Ovary (tissue), 10 donors: ENCODE measurements at regions of chr13 and their contacts with region 1.

Region 1: DNA sequence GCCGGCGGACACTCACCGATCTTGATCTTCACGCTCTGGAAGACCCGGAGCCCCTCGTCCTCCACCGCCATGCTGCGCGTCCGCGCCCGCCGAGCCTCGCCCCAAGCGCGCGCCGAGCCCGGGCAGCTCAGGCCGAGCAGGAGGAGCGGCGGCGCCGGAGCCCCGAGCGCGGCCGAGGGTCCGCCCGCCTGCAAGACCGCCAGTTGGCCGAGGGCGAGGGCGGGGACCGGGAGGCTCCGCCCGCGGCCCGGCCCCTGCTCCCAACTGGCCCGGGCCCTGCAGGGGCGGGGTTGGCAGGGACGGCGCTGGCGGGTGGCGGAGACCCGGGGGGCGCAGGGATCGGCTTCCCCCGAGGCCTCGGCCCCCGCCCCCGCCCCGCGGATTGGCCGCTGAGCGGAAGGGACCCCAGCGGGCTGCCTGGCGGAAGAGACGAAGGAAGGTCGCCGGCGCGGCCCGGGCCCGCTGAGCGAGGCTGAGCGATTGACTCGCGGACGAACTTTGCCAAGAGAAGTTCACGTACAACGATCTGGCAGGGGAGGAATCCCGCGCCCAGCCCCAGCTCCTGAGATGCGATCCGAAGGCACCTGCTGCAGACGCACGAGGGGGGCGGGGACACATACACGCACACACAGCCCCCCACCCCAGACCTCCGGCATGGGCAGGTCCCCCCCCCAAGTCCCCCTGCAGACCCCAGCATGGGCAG is at the start of gene RASA3:
- DNase-seq: peak; percentile 64 to 85 (median 75)
- H3K4me3 ChIP-seq: peak within 1 kb of the TSS; percentile 77
- H3K27ac ChIP-seq: peak within 1 kb of the TSS; percentile 22 to 63
- H3K4me1 ChIP-seq: peaks cover 7% of the 10 kb centered on the region
- H3K27me3 ChIP-seq: no peaks in the 10 kb centered on the region
- CTCF ChIP-seq: no peak
- EP300 ChIP-seq: no peak
- POLR2A ChIP-seq: no peak
- total RNA-seq, gene RASA3: 5.4 to 16.9 (median 9.4) TPM

Region 2: GRCh38 chr13:114053026-114053425 is 79.5 kb before region 1 on chr13:
- intact Hi-C with region 1: loop called in 1 of 4 experiments (anchors 10 kb)
- DNase-seq: no peak
- H3K4me3 ChIP-seq: no peak overlapping the region
- H3K27ac ChIP-seq: no peak overlapping the region
- H3K4me1 ChIP-seq: no peaks in the 10 kb centered on the region
- H3K27me3 ChIP-seq: no peaks in the 10 kb centered on the region
- CTCF ChIP-seq: no peak
- EP300 ChIP-seq: no peak
- POLR2A ChIP-seq: no peak

Region 3: DNA sequence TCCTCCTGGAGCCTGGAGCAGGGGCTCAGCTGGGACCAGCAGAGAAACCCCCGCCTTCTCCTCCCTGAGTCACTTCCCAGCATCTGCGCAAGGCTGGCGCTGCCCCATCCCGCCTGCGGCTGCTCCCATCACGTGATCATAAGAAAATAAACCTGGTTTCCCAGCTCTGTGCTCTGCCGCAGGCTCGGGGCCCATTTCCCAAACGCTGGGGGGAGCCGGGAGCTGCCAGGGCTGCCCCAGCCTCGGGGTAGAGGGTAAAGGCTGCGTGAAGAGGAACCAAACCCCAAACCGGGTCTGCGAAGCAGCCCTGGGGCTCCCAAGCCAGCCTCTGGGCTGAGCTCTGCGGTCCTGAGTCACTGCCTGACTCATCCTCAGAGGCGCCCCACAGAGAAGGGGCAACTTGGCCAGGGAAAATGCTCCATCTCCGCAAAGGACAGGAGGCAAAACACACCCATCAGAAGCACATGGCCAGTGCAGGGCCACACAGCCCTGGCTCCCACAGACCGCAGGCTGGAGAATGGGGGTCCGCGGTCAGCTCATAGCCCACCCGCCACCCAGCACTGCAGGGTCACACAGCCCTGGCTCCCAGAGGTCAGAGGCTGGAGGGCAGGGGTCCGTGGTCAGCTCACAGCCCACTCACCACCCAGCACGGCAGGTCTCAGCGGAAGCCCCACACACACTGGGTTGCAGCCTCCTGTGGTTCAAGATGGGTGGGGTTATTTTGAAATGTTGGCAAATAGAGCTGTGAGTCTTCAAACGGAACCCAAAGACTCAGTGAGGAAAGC is 67.2 kb before region 1 on chr13:
- intact Hi-C with region 1: loop called in 3 of 4 experiments (anchors 5 to 10 kb)
- DNase-seq: peak; percentile 86 to 91 (median 90)
- H3K4me3 ChIP-seq: peak overlapping the region; percentile 38
- H3K27ac ChIP-seq: peak overlapping the region; percentile 89 to 99
- H3K4me1 ChIP-seq: peaks cover 22% of the 10 kb centered on the region
- H3K27me3 ChIP-seq: no peaks in the 10 kb centered on the region
- CTCF ChIP-seq: no peak
- EP300 ChIP-seq: peak; percentile 94
- POLR2A ChIP-seq: peak; percentile 32

Region 4: DNA sequence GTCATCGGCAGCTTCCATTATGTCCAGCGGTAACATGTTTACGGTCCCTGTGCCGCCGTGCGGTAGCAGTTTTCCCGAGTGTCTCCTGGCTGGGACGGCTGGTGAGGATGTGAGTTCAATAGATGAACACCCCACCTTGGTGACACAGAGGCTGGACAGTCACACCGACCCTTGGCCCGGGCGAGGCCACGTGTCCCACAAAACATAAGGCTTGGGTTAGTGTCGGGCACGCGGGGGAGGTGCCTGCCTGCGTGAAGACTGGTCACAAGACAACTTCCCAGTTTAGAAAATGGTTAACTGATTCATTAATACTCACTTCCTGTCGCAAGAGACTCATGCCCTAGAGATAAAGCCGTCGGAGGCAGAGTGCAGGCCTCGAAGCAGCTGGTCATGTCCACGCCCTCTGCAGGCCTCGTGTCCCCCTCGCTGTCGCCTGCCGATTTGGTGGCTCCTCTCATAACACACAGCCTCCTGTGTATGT is 17.3 kb before region 1 on chr13:
- intact Hi-C with region 1: no loop called
- DNase-seq: peak in 3 of 5 donors; percentile 17 to 33 (median 23)
- H3K4me3 ChIP-seq: no peak overlapping the region
- H3K27ac ChIP-seq: no peak overlapping the region
- H3K4me1 ChIP-seq: peaks cover 2% of the 10 kb centered on the region
- H3K27me3 ChIP-seq: no peaks in the 10 kb centered on the region
- CTCF ChIP-seq: no peak
- EP300 ChIP-seq: no peak
- POLR2A ChIP-seq: no peak

Region 5: GRCh38 chr13:114259974-114260373 is 127.4 kb after region 1 on chr13:
- intact Hi-C with region 1: no loop called
- DNase-seq: no peak
- H3K4me3 ChIP-seq: no peak overlapping the region
- H3K27ac ChIP-seq: no peak overlapping the region
- H3K4me1 ChIP-seq: no peaks in the 10 kb centered on the region
- H3K27me3 ChIP-seq: no peaks in the 10 kb centered on the region
- CTCF ChIP-seq: no peak
- EP300 ChIP-seq: no peak
- POLR2A ChIP-seq: no peak